Body of pancreas (tissue), 4 donors: ENCODE measurements at regions of chr19 and their contacts with region 1.

Region 1: GRCh38 chr19:19489804-19490655 is 25.3 kb downstream of the TSSK6 start:
- DNase-seq: peak; percentile 82 to 85 (median 82)
- ATAC-seq: peak; percentile 73
- H3K4me3 ChIP-seq: no peak overlapping the region
- H3K27ac ChIP-seq: peak overlapping the region; percentile 66 to 88 (median 77)
- H3K4me1 ChIP-seq: peaks cover 52% of the 10 kb centered on the region
- H3K27me3 ChIP-seq: no peaks in the 10 kb centered on the region
- CTCF ChIP-seq: peak; percentile 59 to 93 (median 90)
- POLR2A ChIP-seq: no peak

Region 2: DNA sequence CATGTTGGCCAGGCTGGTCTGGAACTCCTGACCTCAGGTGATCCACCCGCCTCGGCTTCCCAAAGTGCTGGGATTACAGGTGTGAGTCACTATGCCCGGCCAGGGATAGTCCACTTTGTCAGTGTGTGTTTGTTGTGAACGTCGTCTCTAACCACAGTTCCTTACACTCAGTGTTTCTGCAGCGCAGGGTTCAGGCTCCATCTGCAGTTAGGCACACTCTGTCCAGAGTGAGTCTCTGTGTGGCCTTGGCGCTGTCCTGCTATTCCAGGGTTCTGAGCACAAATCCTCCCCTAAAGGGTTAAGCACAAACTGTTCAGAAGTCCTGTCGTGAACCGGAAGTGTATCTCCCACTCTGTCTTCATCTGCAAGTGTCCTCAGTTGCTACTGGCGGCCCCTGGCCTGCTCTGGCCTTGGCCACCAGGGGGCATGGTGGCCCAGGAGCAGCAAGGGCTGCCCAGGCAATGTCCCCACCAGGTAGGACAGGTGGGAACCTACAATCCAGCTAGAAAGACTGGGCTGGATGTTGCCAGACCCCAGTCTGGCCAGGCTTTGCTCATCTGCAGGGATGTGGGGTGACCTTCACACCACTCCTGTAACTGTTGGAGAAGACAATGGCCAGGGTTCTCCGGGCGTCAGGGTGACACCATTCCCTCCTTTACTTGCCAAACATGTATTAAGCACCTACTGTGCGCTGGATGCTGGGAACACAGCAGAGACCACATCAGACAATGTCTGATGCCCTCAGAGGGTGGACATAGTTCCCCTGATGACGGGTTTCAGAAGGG is 123.2 kb before region 1 on chr19:
- intact Hi-C with region 1: loop called (anchors 5 kb)
- DNase-seq: peak; percentile 79 to 86 (median 82)
- ATAC-seq: peak; percentile 89
- H3K4me3 ChIP-seq: no peak overlapping the region
- H3K27ac ChIP-seq: peak overlapping the region in 1 of 4 donors; percentile 39
- H3K4me1 ChIP-seq: peaks cover 21% of the 10 kb centered on the region
- H3K27me3 ChIP-seq: no peaks in the 10 kb centered on the region
- CTCF ChIP-seq: peak; percentile 93 to 96 (median 95)
- POLR2A ChIP-seq: no peak